CD4-positive, alpha-beta memory T cell (primary cell): ENCODE measurements at regions of chr4 and their contacts with region 1.

Region 1: GRCh38 chr4:108109997-108110416 is 58.7 kb downstream of the LEF1 start:
- DNase-seq: no peak
- H3K4me3 ChIP-seq: no peak overlapping the region
- H3K4me3 Mint-ChIP-seq: peak overlapping the region; percentile 41 to 88 (median 73)
- H3K27ac ChIP-seq: peak overlapping the region; percentile 49
- H3K27ac Mint-ChIP-seq: peak overlapping the region; percentile 86 to 96 (median 90)
- H3K4me1 ChIP-seq: peaks cover 99% of the 10 kb centered on the region
- H3K4me1 Mint-ChIP-seq: peaks cover 81 to 98% (median 90%) of the 10 kb centered on the region in 4 donors
- H3K27me3 ChIP-seq: no peaks in the 10 kb centered on the region
- H3K27me3 Mint-ChIP-seq: no peaks in the 10 kb centered on the region

Region 2: DNA sequence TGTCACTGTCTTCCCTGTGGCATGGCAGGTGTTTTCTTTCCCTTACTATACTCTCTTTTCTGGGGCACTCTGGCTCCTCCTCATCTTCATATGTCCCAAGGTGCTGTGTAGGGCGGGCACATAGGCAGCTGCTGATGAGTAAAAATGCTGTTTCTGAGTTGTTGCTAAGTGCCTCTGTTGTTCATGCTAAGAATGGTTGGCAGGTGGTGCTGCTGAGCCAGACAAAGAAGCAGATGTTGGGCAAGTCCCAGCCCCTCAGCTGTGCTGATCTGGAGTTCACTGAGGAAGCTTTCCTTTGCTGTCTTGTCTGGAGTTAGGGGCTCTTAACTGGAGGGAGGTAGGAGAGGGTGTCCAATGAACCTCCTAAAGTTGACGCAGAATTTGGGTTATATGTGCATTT is 79.7 kb before region 1 on chr4:
- CTCF ChIA-PET with region 1: interaction called, 11 read pairs
- POLR2A ChIA-PET with region 1: interaction called, 7 read pairs
- intact Hi-C with region 1: no loop called
- DNase-seq: peak; percentile 62 to 75 (median 70)
- H3K4me3 ChIP-seq: no peak overlapping the region
- H3K4me3 Mint-ChIP-seq: peak overlapping the region in 5 of 8 donors; percentile 50 to 76 (median 56)
- H3K27ac ChIP-seq: no peak overlapping the region
- H3K27ac Mint-ChIP-seq: peak overlapping the region; percentile 31 to 94 (median 84)
- H3K4me1 ChIP-seq: peaks cover 25% of the 10 kb centered on the region
- H3K4me1 Mint-ChIP-seq: peaks cover 21 to 40% (median 25%) of the 10 kb centered on the region in 4 donors
- H3K27me3 ChIP-seq: no peaks in the 10 kb centered on the region
- H3K27me3 Mint-ChIP-seq: no peaks in the 10 kb centered on the region

Region 3: GRCh38 chr4:108080747-108081146 is 29.3 kb before region 1 on chr4:
- CTCF ChIA-PET with region 1: no interaction called
- POLR2A ChIA-PET with region 1: interaction called, 24 read pairs
- intact Hi-C with region 1: loop called (anchors 5 kb)
- DNase-seq: peak; percentile 39 to 62 (median 48)
- H3K4me3 ChIP-seq: no peak overlapping the region
- H3K4me3 Mint-ChIP-seq: peak overlapping the region; percentile 61 to 83 (median 78)
- H3K27ac ChIP-seq: peak overlapping the region; percentile 23
- H3K27ac Mint-ChIP-seq: peak overlapping the region; percentile 82 to 94 (median 91)
- H3K4me1 ChIP-seq: peaks cover 35% of the 10 kb centered on the region
- H3K4me1 Mint-ChIP-seq: peaks cover 28 to 54% (median 45%) of the 10 kb centered on the region in 4 donors
- H3K27me3 ChIP-seq: no peaks in the 10 kb centered on the region
- H3K27me3 Mint-ChIP-seq: no peaks in the 10 kb centered on the region

Region 4: GRCh38 chr4:108126806-108127205 is 16.8 kb after region 1 on chr4:
- CTCF ChIA-PET with region 1: interaction called, 13 read pairs
- POLR2A ChIA-PET with region 1: interaction called, 14 read pairs
- intact Hi-C with region 1: loop called (anchors 2 kb)
- DNase-seq: no peak
- H3K4me3 ChIP-seq: no peak overlapping the region
- H3K4me3 Mint-ChIP-seq: peak overlapping the region in 1 of 8 donors; percentile 23
- H3K27ac ChIP-seq: no peak overlapping the region
- H3K27ac Mint-ChIP-seq: peak overlapping the region in 6 of 7 donors; percentile 37 to 86 (median 58)
- H3K4me1 ChIP-seq: peaks cover 95% of the 10 kb centered on the region
- H3K4me1 Mint-ChIP-seq: peaks cover 50 to 79% (median 62%) of the 10 kb centered on the region in 4 donors
- H3K27me3 ChIP-seq: no peaks in the 10 kb centered on the region
- H3K27me3 Mint-ChIP-seq: no peaks in the 10 kb centered on the region

Region 5: GRCh38 chr4:108166441-108167315 is 56.7 kb after region 1 on chr4:
- CTCF ChIA-PET with region 1: interaction called, 64 read pairs
- POLR2A ChIA-PET with region 1: interaction called, 460 read pairs
- intact Hi-C with region 1: loop called (anchors 1 kb)
- DNase-seq: peak; percentile 56 to 71 (median 57)
- H3K4me3 ChIP-seq: peak overlapping the region; percentile 81 to 91
- H3K4me3 Mint-ChIP-seq: peak overlapping the region; percentile 98 to 100 (median 98)
- H3K27ac ChIP-seq: peak overlapping the region; percentile 64
- H3K27ac Mint-ChIP-seq: peak overlapping the region; percentile 85 to 96 (median 94)
- H3K4me1 ChIP-seq: peaks cover 46% of the 10 kb centered on the region
- H3K4me1 Mint-ChIP-seq: peaks cover 23 to 78% (median 38%) of the 10 kb centered on the region in 4 donors
- H3K27me3 ChIP-seq: peaks cover 11% of the 10 kb centered on the region
- H3K27me3 Mint-ChIP-seq: peaks cover 15 to 28% of the 10 kb centered on the region in 2 donors